Activated CD4-positive, alpha-beta T cell treated with anti-CD3 and anti-CD28 coated beads for 36 hours (primary cell): ENCODE measurements at regions of chr4 and their contacts with region 1.

Region 1: GRCh38 chr4:1856042-1856788 is at the start of gene LETM1:
- DNase-seq: peak; percentile 97
- ATAC-seq: peak; percentile 99
- H3K4me3 Mint-ChIP-seq: peak within 1 kb of the TSS; percentile 78
- H3K27ac Mint-ChIP-seq: peak within 1 kb of the TSS; percentile 55
- H3K4me1 Mint-ChIP-seq: peaks cover 40% of the 10 kb centered on the region
- H3K27me3 Mint-ChIP-seq: no peaks in the 10 kb centered on the region
- total RNA-seq, gene LETM1: 41.6 to 51.3 TPM

Region 2: GRCh38 chr4:825238-825835 is 1030.9 kb before region 1 on chr4:
- CTCF ChIA-PET with region 1: no interaction called
- POLR2A ChIA-PET with region 1: no interaction called
- intact Hi-C with region 1: no loop called
- DNase-seq: peak; percentile 50
- ATAC-seq: peak; percentile 37
- H3K4me3 Mint-ChIP-seq: no peak overlapping the region
- H3K27ac Mint-ChIP-seq: no peak overlapping the region
- H3K4me1 Mint-ChIP-seq: no peaks in the 10 kb centered on the region
- H3K27me3 Mint-ChIP-seq: peaks cover 35% of the 10 kb centered on the region

Region 3: GRCh38 chr4:1249148-1249730 is 607.0 kb before region 1 on chr4:
- CTCF ChIA-PET with region 1: no interaction called
- POLR2A ChIA-PET with region 1: no interaction called
- intact Hi-C with region 1: loop called in 1 of 2 experiments (anchors 5 kb)
- DNase-seq: peak; percentile 90
- ATAC-seq: peak; percentile 63
- H3K4me3 Mint-ChIP-seq: peak overlapping the region; percentile 80
- H3K27ac Mint-ChIP-seq: peak overlapping the region; percentile 94
- H3K4me1 Mint-ChIP-seq: peaks cover 74% of the 10 kb centered on the region
- H3K27me3 Mint-ChIP-seq: no peaks in the 10 kb centered on the region

Region 4: DNA sequence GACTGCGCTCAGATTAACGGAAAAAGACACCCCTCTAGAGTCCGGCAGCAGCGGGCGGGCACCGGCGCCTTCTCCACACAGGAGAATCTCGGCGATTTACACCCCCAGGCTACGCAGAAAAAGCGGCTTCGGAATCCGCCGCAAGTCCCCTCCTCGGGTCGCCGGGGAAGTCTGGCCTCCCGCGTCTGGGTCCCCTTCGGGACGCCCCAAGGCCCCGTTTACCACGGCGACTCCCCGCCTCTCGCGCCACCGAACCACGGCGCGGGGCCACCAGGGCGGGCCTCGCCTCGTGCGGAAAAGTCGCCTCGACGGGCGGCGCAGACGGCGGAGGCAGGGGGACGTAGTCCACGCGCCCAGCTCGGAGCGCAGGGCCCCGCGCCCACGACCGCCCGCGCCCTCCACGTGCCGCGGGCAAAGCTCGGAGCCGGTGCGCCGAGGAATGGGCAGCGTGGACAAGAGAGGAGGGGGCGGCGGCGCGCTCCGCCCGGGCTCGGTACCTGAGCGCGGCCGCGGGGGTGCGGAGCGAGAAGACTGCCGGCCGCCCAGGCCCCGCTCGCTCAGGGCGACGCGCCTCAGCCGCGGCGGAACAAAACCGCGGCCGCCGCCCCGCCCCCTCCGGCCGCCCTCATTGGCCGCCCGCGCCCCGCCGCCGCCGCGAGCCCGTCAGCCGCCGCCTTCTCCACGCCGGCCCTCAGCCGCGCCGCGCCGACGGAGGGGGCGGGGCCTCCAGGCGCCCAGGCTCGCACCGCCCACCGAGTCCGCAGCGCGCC is 172.3 kb before region 1 on chr4 and contains the start of gene FAM53A:
- CTCF ChIA-PET with region 1: no interaction called
- POLR2A ChIA-PET with region 1: no interaction called
- intact Hi-C with region 1: loop called in 1 of 2 experiments (anchors 1 kb)
- DNase-seq: no peak
- ATAC-seq: peak; percentile 96
- H3K4me3 Mint-ChIP-seq: peak within 1 kb of the TSS; percentile 69
- H3K27ac Mint-ChIP-seq: peak within 1 kb of the TSS; percentile 69
- H3K4me1 Mint-ChIP-seq: peaks cover 12% of the 10 kb centered on the region
- H3K27me3 Mint-ChIP-seq: no peaks in the 10 kb centered on the region
- total RNA-seq, gene FAM53A: 2.0 to 2.5 TPM

Region 5: DNA sequence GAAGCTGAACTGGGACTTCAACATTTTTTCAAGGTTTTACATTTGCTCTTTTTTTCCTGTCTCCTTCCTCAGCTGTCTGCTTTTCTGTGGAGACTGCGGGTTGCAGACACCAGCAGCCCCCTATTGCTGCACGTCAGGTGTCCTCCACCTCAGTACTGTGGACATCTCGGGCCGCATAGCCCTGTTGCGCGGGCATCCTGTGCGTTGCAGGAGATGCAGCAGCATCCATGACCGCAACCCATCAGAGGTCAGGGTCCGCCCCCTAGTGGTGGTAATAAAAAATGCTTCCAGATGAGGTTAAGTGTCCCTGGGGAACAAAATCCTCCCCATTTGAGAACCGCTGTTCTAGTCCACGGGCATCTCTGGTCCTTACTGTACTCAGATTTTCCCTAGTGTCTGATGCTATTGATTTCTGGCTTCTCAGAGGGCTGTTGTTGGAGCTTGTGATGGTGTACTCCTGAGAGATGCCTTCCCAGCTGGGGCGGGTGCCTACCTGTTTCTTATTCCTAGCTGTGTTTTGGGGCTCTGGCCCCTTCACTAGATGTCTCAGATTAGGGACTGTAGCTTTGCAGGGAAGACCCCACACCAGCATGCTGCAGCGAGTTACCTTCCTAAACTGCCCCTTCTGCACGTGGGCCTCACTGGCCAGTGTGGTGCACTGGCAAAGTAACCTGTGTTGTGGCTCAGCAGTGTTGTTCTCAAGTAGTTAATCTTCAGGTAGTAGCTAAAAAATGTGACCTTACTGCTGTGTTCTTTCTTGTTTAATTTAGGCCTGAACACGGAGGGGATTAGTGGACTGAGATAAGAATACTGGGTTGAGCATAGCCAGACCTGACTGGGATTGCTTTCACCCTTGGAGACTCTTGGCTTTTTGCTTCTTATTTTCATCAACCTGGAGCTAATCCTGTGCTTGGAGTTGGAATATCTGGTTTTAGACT is 43.2 kb after region 1 on chr4:
- CTCF ChIA-PET with region 1: interaction called, 19 read pairs
- POLR2A ChIA-PET with region 1: interaction called, 7 read pairs
- intact Hi-C with region 1: loop called (anchors 1 kb)
- DNase-seq: peak; percentile 84
- ATAC-seq: peak; percentile 91
- H3K4me3 Mint-ChIP-seq: no peak overlapping the region
- H3K27ac Mint-ChIP-seq: peak overlapping the region; percentile 75
- H3K4me1 Mint-ChIP-seq: peaks cover 28% of the 10 kb centered on the region
- H3K27me3 Mint-ChIP-seq: no peaks in the 10 kb centered on the region

Region 6: GRCh38 chr4:2320152-2320551 is 463.9 kb after region 1 on chr4:
- CTCF ChIA-PET with region 1: no interaction called
- POLR2A ChIA-PET with region 1: no interaction called
- intact Hi-C with region 1: no loop called
- DNase-seq: no peak
- ATAC-seq: no peak
- H3K4me3 Mint-ChIP-seq: no peak overlapping the region
- H3K27ac Mint-ChIP-seq: no peak overlapping the region
- H3K4me1 Mint-ChIP-seq: no peaks in the 10 kb centered on the region
- H3K27me3 Mint-ChIP-seq: no peaks in the 10 kb centered on the region

Region 7: GRCh38 chr4:2412885-2413716 is 556.9 kb after region 1 on chr4:
- CTCF ChIA-PET with region 1: no interaction called
- POLR2A ChIA-PET with region 1: no interaction called
- intact Hi-C with region 1: loop called in 1 of 2 experiments (anchors 1 kb)
- DNase-seq: peak; percentile 94
- ATAC-seq: peak; percentile 82
- H3K4me3 Mint-ChIP-seq: peak overlapping the region; percentile 70
- H3K27ac Mint-ChIP-seq: peak overlapping the region; percentile 97
- H3K4me1 Mint-ChIP-seq: peaks cover 69% of the 10 kb centered on the region
- H3K27me3 Mint-ChIP-seq: peaks cover 9% of the 10 kb centered on the region

Region 8: DNA sequence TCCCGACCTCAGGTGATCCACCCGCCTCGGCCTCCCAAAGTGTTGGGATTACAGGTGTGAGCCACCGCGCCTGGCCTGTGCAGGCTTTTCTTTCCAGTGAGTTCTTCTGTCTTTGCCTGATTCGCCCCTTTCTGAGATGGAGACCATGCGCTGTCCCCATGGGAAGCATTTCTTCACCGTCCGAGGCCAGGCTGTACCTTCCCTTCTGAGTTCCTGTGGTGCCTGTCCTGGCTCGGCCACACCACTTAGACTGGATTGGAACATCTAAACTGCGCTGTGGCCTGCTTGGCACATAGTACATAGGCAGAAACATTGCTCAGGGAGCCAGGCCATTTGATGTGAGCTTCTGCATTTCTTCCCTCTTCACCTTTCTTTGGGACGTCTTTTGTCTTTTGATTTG is 704.0 kb after region 1 on chr4:
- CTCF ChIA-PET with region 1: no interaction called
- POLR2A ChIA-PET with region 1: no interaction called
- intact Hi-C with region 1: no loop called
- DNase-seq: no peak
- ATAC-seq: no peak
- H3K4me3 Mint-ChIP-seq: no peak overlapping the region
- H3K27ac Mint-ChIP-seq: no peak overlapping the region
- H3K4me1 Mint-ChIP-seq: peaks cover 37% of the 10 kb centered on the region
- H3K27me3 Mint-ChIP-seq: no peaks in the 10 kb centered on the region

Region 9: GRCh38 chr4:3201718-3202702 is 1345.8 kb after region 1 on chr4:
- CTCF ChIA-PET with region 1: no interaction called
- POLR2A ChIA-PET with region 1: no interaction called
- intact Hi-C with region 1: loop called in 1 of 2 experiments (anchors 5 kb)
- DNase-seq: peak; percentile 82
- ATAC-seq: peak; percentile 92
- H3K4me3 Mint-ChIP-seq: peak overlapping the region; percentile 41
- H3K27ac Mint-ChIP-seq: peak overlapping the region; percentile 82
- H3K4me1 Mint-ChIP-seq: peaks cover 49% of the 10 kb centered on the region
- H3K27me3 Mint-ChIP-seq: no peaks in the 10 kb centered on the region